GM13977 (cell line): ENCODE measurements at regions of chr11 and their contacts with region 1.

Region 1: DNA sequence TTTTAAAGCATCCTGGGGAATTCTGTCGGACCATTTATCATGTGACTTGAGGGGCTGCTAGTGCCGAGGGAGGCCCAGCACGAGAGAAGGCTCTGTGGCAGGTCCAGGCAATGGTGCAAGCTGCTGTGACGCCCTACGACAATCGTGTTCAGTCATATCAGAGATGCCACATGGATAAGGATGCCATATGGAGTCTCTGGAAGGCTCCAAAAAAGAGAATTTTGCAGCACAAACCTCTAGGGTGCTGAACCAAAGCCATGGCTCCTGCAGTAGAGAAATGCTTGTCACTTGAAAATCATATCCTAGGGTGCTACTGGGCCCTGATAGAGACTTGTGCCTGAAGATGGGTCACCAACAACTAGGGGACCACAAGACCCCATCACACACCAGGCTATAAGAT is 6.7 kb upstream of the CD6 start:
- DNase-seq: no peak
- CTCF ChIP-seq: no peak

Region 2: GRCh38 chr11:60477035-60477445 is 487.8 kb before region 1 on chr11:
- in situ Hi-C with region 1: no loop called
- DNase-seq: no peak
- CTCF ChIP-seq: no peak

Region 3: GRCh38 chr11:61129639-61130523 is 165.1 kb after region 1 on chr11:
- in situ Hi-C with region 1: loop called (anchors 10 kb)
- DNase-seq: peak; percentile 98
- CTCF ChIP-seq: peak; percentile 100